Activated naive CD4-positive, alpha-beta T cell treated with anti-CD3 and anti-CD28 coated beads for 36 hours (primary cell): ENCODE measurements at regions of chr16 and their contacts with region 1.

Region 1: DNA sequence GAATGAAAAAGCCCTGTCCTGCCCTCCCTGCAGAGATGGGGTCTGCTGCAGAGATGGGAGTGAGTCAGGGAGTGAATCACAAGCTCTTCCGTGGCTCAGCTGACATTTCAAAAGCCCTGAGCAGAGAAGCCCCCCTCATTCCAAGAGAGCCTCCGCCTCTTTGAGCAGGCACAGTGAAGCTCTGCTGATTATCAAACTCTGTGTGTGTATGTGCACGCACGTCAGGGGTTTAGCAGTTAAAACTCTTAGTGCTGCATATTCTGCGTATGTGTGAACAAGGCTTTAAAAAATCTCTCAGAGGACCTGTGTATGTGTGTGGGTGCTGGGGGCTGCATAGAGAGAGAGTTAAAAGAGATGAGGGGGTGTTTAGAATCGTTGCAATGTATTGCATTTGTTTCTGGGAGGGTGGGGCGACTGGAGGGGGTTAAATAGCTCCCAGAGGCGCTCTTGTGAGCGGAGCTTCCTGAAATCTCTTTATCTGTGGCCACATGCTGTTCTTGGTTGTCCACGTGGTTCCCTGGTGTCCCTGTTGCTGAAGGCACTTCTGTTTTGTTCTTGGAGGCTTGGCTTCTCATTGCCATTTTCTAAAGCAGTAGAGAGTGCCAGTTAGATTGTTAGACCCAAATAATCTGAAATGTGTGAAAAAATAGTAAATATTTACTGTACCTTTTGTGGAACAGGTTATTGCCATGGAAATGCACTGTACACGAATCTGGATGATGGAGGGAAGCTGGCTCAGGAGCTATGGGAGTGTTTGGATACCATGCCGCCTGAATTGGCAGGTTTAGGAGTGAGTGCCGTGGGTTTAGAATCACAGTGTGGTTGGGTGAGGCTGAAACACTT is 116.6 kb downstream of the PRKCB start:
- DNase-seq: peak; percentile 60
- H3K4me3 Mint-ChIP-seq: peak overlapping the region; percentile 13
- H3K27ac Mint-ChIP-seq: peak overlapping the region; percentile 3
- H3K4me1 Mint-ChIP-seq: peaks cover 78% of the 10 kb centered on the region
- H3K27me3 Mint-ChIP-seq: no peaks in the 10 kb centered on the region

Region 2: GRCh38 chr16:23835390-23836077 is 116.8 kb before region 1 on chr16 and contains the start of gene PRKCB:
- CTCF ChIA-PET with region 1: no interaction called
- intact Hi-C with region 1: loop called (anchors 2 kb)
- DNase-seq: peak; percentile 91
- H3K4me3 Mint-ChIP-seq: peak within 1 kb of the TSS; percentile 91
- H3K27ac Mint-ChIP-seq: peak within 1 kb of the TSS; percentile 40
- H3K4me1 Mint-ChIP-seq: peaks cover 57% of the 10 kb centered on the region
- H3K27me3 Mint-ChIP-seq: no peaks in the 10 kb centered on the region
- total RNA-seq, gene PRKCB: 37.1 to 38.9 TPM

Region 3: DNA sequence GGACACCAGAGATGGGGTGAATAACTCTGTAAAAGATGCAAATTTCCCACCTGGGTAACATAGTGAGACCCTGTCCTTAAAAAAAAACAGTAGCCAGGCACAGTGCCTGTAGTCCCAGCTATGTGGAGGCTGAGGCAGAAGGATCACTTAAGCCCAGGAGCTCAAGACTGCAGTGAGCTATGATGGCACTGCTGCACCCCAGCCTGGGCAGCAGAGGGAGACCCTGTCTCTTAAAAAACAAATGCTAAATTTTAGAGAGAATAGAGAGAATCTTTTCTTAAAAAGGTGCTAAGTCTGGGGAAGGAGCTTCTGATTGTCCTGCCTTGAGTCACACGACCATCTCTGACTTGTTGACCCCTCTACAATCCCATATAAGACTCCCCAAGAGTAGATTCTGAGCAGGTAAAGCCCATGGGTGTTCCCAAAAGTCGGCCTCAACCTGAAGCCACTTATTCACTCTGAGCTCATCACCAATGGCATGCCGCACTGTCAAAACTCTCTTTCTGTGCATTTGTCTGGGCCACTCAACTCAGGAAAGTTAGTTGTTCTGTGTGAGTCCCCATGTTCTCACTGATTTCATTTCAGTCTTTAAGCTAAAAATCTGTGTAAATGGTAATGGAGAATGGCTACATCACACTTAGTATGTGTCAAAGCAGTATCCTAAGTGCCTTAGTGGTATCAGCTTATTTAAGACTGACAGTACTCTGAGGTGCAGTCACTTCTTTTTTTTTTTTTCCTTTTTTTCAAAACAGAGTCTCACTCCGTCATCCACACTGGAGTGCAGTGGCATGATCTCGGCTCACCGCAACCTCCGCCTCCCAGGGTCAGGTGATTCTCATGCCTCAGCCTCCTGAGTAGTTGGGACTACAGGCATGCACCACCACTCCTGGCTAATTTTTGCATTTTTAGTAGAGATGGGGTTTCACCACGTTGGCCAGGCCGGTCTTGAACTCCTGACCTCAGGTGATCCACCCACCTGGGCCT is 75.0 kb before region 1 on chr16:
- CTCF ChIA-PET with region 1: interaction called, 6 read pairs
- intact Hi-C with region 1: loop called (anchors 2 kb)
- DNase-seq: peak; percentile 52
- H3K4me3 Mint-ChIP-seq: no peak overlapping the region
- H3K27ac Mint-ChIP-seq: peak overlapping the region; percentile 55
- H3K4me1 Mint-ChIP-seq: peaks cover 69% of the 10 kb centered on the region
- H3K27me3 Mint-ChIP-seq: no peaks in the 10 kb centered on the region

Region 4: DNA sequence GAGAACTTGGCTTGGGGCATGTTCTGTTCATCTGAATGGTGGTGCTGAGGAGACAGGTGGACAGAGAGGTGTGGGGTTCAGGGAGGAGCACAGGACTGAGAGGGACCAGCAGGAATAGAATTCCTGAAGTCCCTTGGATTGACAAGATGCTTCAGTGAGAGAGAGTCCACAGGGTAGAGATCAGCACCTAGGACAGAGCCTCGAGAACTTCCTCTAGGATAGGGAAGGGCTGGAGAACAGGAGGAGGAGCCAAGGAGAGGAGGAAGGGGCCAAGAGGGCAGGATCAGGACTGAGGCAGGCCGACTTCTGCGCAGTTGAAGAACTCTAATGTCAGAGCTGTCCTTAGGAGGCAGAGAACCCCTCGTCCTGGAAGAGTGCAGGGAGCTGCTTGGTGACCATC is 21.9 kb after region 1 on chr16:
- CTCF ChIA-PET with region 1: no interaction called
- intact Hi-C with region 1: no loop called
- DNase-seq: no peak
- H3K4me3 Mint-ChIP-seq: no peak overlapping the region
- H3K27ac Mint-ChIP-seq: no peak overlapping the region
- H3K4me1 Mint-ChIP-seq: peaks cover 53% of the 10 kb centered on the region
- H3K27me3 Mint-ChIP-seq: no peaks in the 10 kb centered on the region

Region 5: DNA sequence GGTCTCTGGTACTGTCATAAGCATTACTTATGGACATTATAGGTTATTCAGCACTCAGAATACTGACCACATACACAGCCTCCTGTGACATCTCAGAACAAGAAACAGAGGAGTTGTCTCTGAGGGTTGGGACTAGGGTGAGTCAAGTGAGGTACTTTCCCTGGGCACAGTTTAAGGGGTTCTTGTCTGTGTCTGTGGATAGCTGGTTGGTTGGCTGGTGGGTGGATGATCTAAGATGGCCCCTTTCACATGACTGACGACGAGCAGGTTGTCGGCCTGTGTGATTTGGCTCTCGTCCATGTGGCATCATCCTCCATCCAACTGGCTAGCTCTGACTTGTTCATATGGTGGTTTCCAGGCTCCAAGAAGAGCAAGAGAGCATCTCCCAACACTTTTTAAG is 47.3 kb after region 1 on chr16:
- CTCF ChIA-PET with region 1: no interaction called
- intact Hi-C with region 1: loop called (anchors 2 kb)
- DNase-seq: peak; percentile 69
- H3K4me3 Mint-ChIP-seq: no peak overlapping the region
- H3K27ac Mint-ChIP-seq: no peak overlapping the region
- H3K4me1 Mint-ChIP-seq: peaks cover 16% of the 10 kb centered on the region
- H3K27me3 Mint-ChIP-seq: no peaks in the 10 kb centered on the region